Aorta (tissue), 5 donors: ENCODE measurements at regions of chr3 and their contacts with region 1.

Region 1: DNA sequence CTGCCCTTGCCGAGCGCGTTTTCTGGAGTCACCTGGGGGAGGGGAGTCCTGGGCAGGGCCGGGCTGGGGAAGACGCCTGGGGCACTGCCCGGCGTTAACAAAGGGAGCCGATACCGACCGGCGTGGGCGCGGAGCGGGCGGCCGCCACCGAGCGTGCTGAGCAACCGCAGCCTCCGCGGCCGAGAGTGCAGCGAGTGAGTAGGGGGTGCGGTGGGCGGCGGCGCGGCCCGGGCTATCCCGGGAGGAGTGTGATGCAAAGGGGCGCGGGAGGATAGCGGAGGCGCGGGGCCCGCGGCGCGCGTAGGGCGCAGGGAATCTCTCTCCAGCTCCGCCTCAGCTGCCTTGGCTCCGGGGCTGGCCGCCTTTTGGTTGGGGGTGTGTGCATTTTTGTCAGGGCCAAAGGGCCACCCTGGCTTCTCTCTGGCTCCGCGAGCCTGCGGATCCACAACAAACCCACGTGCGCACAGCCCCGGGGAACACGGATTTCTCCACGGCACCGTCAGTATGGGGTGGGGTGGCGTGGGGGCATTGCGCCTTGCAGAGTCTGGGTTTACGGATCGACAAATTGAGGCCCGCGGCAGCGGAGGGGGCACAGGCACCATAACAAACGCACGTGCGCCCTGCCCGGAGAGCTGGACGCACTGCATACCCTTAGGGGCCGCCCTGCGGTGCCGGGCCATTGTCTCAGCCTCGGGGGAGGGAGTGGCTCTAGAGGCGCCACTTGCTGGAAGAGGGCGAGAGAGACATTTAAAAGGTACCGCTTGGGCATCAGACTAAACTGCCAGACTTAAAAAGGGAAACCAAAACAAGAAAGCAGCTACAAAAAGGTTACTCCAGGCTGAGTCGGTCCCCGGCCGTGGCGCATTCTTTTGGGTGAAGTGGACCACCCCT is 560 bp downstream of the ST6GAL1 start:
- DNase-seq: peak; percentile 84 to 87
- ATAC-seq: peak; percentile 85
- H3K4me3 ChIP-seq: peak overlapping the region; percentile 57 to 76
- H3K27ac ChIP-seq: peak overlapping the region; percentile 39 to 62
- H3K4me1 ChIP-seq: no peaks in the 10 kb centered on the region
- H3K27me3 ChIP-seq: no peaks in the 10 kb centered on the region

Region 2: GRCh38 chr3:186789554-186790260 is 141.2 kb before region 1 on chr3:
- intact Hi-C with region 1: loop called in 1 of 2 experiments (anchors 5 kb)
- DNase-seq: no peak
- ATAC-seq: no peak
- H3K4me3 ChIP-seq: no peak overlapping the region
- H3K27ac ChIP-seq: no peak overlapping the region
- H3K4me1 ChIP-seq: peaks cover 0 to 8% of the 10 kb centered on the region in 2 donors
- H3K27me3 ChIP-seq: no peaks in the 10 kb centered on the region

Region 3: GRCh38 chr3:186849374-186849975 is 81.4 kb before region 1 on chr3:
- intact Hi-C with region 1: loop called in 1 of 2 experiments (anchors 5 kb)
- DNase-seq: no peak
- ATAC-seq: no peak
- H3K4me3 ChIP-seq: no peak overlapping the region
- H3K27ac ChIP-seq: no peak overlapping the region
- H3K4me1 ChIP-seq: no peaks in the 10 kb centered on the region
- H3K27me3 ChIP-seq: no peaks in the 10 kb centered on the region

Region 4: GRCh38 chr3:186959029-186959624 is 28.2 kb after region 1 on chr3:
- intact Hi-C with region 1: no loop called
- DNase-seq: no peak
- ATAC-seq: no peak
- H3K4me3 ChIP-seq: no peak overlapping the region
- H3K27ac ChIP-seq: no peak overlapping the region
- H3K4me1 ChIP-seq: peaks cover 2 to 7% of the 10 kb centered on the region in 2 donors
- H3K27me3 ChIP-seq: no peaks in the 10 kb centered on the region

Region 5: GRCh38 chr3:186971578-186971977 is 40.7 kb after region 1 on chr3:
- intact Hi-C with region 1: loop called (anchors 5 kb)
- DNase-seq: peak in 1 of 2 donors; percentile 85
- ATAC-seq: peak; percentile 85
- H3K4me3 ChIP-seq: no peak overlapping the region
- H3K27ac ChIP-seq: peak overlapping the region; percentile 92 to 96
- H3K4me1 ChIP-seq: peaks cover 4 to 5% of the 10 kb centered on the region in 2 donors
- H3K27me3 ChIP-seq: no peaks in the 10 kb centered on the region

Region 6: GRCh38 chr3:186976837-186977750 is 46.2 kb after region 1 on chr3:
- intact Hi-C with region 1: loop called (anchors 5 kb)
- DNase-seq: peak; percentile 87 to 91
- ATAC-seq: peak; percentile 91
- H3K4me3 ChIP-seq: no peak overlapping the region
- H3K27ac ChIP-seq: peak overlapping the region; percentile 52 to 98
- H3K4me1 ChIP-seq: peaks cover 4 to 7% of the 10 kb centered on the region in 2 donors
- H3K27me3 ChIP-seq: no peaks in the 10 kb centered on the region

Region 7: GRCh38 chr3:187101184-187102072 is 170.5 kb after region 1 on chr3:
- intact Hi-C with region 1: loop called in 1 of 2 experiments (anchors 5 kb)
- DNase-seq: peak; percentile 92
- ATAC-seq: peak; percentile 82
- H3K4me3 ChIP-seq: peak overlapping the region in 1 of 2 donors; percentile 32
- H3K27ac ChIP-seq: peak overlapping the region; percentile 73 to 91
- H3K4me1 ChIP-seq: peaks cover 10 to 12% of the 10 kb centered on the region in 2 donors
- H3K27me3 ChIP-seq: no peaks in the 10 kb centered on the region

Region 8: DNA sequence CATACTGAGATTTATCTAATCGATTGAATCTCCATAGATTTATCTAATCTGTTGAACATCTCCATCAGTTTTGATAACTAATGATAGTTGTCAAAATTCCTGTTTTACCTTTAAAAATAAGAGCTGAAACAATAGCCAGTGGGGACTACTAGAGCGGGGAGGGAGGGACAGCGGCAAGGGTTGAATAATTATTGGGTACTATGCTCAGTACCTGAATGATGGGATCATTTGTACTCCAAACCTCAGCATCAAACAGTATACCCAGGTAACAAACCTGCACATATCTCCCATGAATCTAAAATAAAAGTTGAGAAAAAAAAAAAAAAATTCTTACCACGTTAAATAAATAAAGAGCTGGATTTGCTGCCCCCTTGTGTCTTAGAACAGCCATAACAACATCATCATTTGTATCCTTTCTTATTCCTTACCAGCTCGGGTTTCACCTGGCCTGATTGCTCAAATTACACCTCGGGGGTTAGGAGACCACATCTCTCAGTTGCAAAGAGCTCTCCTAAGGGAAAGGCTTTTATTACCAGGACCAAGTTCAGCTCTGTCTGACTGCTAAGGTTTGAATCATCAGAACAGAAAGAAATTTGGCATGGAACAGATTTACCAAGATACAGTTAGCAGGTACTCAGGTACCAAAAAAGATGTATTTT is 234.1 kb after region 1 on chr3:
- intact Hi-C with region 1: no loop called
- DNase-seq: no peak
- ATAC-seq: peak; percentile 58
- H3K4me3 ChIP-seq: no peak overlapping the region
- H3K27ac ChIP-seq: no peak overlapping the region
- H3K4me1 ChIP-seq: peaks cover 0 to 3% of the 10 kb centered on the region in 2 donors
- H3K27me3 ChIP-seq: no peaks in the 10 kb centered on the region